ENCODE measurements at regions of chr13 and their contacts with region 1.

Region 1: GRCh38 chr13:44710576-44710975 is 134.4 kb upstream of the TSC22D1 start:
- DNase-seq: peak; percentile 92
- H3K4me3 ChIP-seq: peak overlapping the region in 1 of 3 experiments; percentile 29
- H3K27ac ChIP-seq: peak overlapping the region; percentile 91
- H3K4me1 ChIP-seq: peaks cover 38% of the 10 kb centered on the region
- H3K27me3 ChIP-seq: no peaks in the 10 kb centered on the region
- CTCF ChIP-seq: no peak
- POLR2A ChIP-seq: no peak

Region 2: GRCh38 chr13:44237276-44237767 is 473.3 kb before region 1 on chr13:
- CTCF ChIA-PET with region 1: no interaction called
- POLR2A ChIA-PET with region 1: no interaction called
- dilution Hi-C with region 1: no loop called
- intact Hi-C with region 1: loop called (anchors 2 kb)
- DNase-seq: peak; percentile 97
- H3K4me3 ChIP-seq: no peak overlapping the region
- H3K27ac ChIP-seq: peak overlapping the region; percentile 84
- H3K4me1 ChIP-seq: peaks cover 21% of the 10 kb centered on the region
- H3K27me3 ChIP-seq: no peaks in the 10 kb centered on the region
- CTCF ChIP-seq: no peak
- POLR2A ChIP-seq: no peak

Region 3: DNA sequence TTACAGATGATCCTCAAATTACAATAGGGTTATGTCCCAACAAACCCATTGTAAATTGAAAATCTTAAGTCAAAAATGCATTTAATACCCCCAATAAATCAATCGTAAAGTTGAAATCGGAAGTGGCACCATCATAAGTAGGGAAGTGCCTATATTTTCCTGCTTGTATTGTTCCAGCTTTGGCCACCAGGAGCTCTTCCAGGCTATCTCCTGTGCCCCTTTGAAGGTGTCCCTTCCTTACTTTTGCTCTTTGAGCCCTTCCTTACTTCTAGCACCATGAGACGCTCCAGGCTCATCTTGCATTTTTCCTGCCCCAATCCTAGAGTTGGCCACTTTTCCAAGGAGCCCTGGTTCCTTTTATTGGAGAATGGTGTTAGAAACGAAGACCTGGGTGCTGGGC is 28.5 kb after region 1 on chr13:
- CTCF ChIA-PET with region 1: interaction called, 8 read pairs
- POLR2A ChIA-PET with region 1: no interaction called
- dilution Hi-C with region 1: no loop called
- intact Hi-C with region 1: loop called (anchors 2 kb)
- DNase-seq: no peak
- H3K4me3 ChIP-seq: no peak overlapping the region
- H3K27ac ChIP-seq: no peak overlapping the region
- H3K4me1 ChIP-seq: peaks cover 6% of the 10 kb centered on the region
- H3K27me3 ChIP-seq: no peaks in the 10 kb centered on the region
- CTCF ChIP-seq: peak in 1 of 2 donors; percentile 20
- POLR2A ChIP-seq: no peak

Region 4: DNA sequence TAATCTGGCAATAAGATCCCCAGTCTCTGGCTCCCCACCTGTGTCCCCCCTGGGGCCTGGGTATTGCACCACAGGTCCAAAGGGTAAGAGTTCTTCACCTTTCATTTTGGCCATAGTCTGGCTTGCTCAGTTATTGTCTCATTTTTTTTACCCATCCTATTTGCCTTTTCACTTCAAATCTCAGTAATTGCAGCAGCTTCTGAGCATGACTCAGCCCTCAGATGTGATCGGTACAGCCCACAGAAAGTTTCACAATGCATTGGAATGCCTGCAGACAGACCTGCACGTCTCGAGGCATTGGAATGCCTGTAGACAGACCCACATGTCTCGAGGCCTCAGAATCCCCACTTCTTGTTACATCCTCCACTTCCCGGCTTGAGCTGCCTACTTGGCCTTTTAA is 105.0 kb after region 1 on chr13:
- CTCF ChIA-PET with region 1: interaction called, 6 read pairs
- POLR2A ChIA-PET with region 1: no interaction called
- dilution Hi-C with region 1: no loop called
- intact Hi-C with region 1: loop called (anchors 2 kb)
- DNase-seq: peak; percentile 54
- H3K4me3 ChIP-seq: no peak overlapping the region
- H3K27ac ChIP-seq: no peak overlapping the region
- H3K4me1 ChIP-seq: peaks cover 29% of the 10 kb centered on the region
- H3K27me3 ChIP-seq: no peaks in the 10 kb centered on the region
- CTCF ChIP-seq: no peak
- POLR2A ChIP-seq: no peak

Region 5: GRCh38 chr13:44917589-44918325 is 207.2 kb after region 1 on chr13:
- CTCF ChIA-PET with region 1: interaction called, 8 read pairs
- POLR2A ChIA-PET with region 1: interaction called, 5 read pairs
- dilution Hi-C with region 1: no loop called
- intact Hi-C with region 1: loop called (anchors 2 kb)
- DNase-seq: peak; percentile 98
- H3K4me3 ChIP-seq: peak overlapping the region; percentile 4 to 66 (median 38)
- H3K27ac ChIP-seq: peak overlapping the region; percentile 95
- H3K4me1 ChIP-seq: peaks cover 29% of the 10 kb centered on the region
- H3K27me3 ChIP-seq: no peaks in the 10 kb centered on the region
- CTCF ChIP-seq: peak; percentile 38 to 42
- POLR2A ChIP-seq: no peak

Region 6: GRCh38 chr13:45257638-45258338 is 547.2 kb after region 1 on chr13:
- CTCF ChIA-PET with region 1: no interaction called
- POLR2A ChIA-PET with region 1: no interaction called
- dilution Hi-C with region 1: no loop called
- intact Hi-C with region 1: no loop called
- DNase-seq: no peak
- H3K4me3 ChIP-seq: no peak overlapping the region
- H3K27ac ChIP-seq: no peak overlapping the region
- H3K4me1 ChIP-seq: no peaks in the 10 kb centered on the region
- H3K27me3 ChIP-seq: no peaks in the 10 kb centered on the region
- CTCF ChIP-seq: no peak
- POLR2A ChIP-seq: no peak

Measured in endothelial cell of umbilical vein (primary cell).